ENCODE measurements at regions of chr2 and their contacts with region 1.

Region 1: DNA sequence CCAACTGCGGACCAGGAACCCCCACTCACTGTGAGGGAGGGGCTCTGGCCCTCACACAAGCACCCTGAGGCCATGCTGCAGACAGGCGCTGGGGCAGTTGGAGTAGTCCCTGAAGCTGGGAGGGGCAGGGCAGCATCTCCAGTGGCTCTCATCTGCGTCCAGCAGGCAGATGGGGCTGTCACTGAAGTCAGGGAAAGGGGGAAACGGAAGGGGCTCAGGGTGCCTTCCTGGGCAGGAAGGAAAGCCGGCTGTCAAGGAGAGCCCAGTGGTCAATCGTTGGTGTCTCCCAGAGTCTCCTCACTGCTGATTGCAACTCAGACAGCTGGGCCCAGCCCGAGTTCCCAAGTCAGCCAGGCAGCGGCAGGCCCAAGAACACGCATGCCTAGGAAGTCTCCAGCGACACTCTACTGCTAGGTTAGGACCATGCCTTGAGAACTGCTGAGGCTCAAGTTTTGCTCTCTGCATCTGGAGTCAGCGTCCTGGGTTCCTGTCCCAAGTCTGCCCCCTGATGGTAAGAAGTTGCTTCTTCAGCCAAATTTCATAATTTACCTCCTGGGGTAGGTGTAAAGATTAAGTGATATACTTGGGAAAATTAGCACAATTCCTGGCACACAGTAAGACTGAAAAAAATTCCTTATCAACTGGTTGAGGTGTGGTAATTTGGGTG is 27.5 kb upstream of the NMUR1 start:
- DNase-seq: peak; percentile 61 to 76
- ATAC-seq: peak; percentile 99
- H3K4me3 ChIP-seq: no peak overlapping the region
- H3K27ac ChIP-seq: peak overlapping the region in 2 of 4 donors; percentile 46 to 62
- H3K4me1 ChIP-seq: peaks cover 0 to 7% of the 10 kb centered on the region in 2 donors
- H3K27me3 ChIP-seq: no peaks in the 10 kb centered on the region
- CTCF ChIP-seq: peak; percentile 37 to 77 (median 65)
- POLR2A ChIP-seq: no peak

Region 2: GRCh38 chr2:231470246-231470900 is 87.3 kb before region 1 on chr2:
- in situ Hi-C with region 1: loop called in 1 of 4 experiments (anchors 10 kb)
- intact Hi-C with region 1: no loop called
- DNase-seq: no peak
- ATAC-seq: no peak
- H3K4me3 ChIP-seq: no peak overlapping the region
- H3K27ac ChIP-seq: no peak overlapping the region
- H3K4me1 ChIP-seq: peaks cover 3% of the 10 kb centered on the region in 2 donors
- H3K27me3 ChIP-seq: no peaks in the 10 kb centered on the region
- CTCF ChIP-seq: no peak
- POLR2A ChIP-seq: no peak

Region 3: GRCh38 chr2:231482806-231483391 is 74.8 kb before region 1 on chr2:
- in situ Hi-C with region 1: loop called in 1 of 4 experiments (anchors 10 kb)
- intact Hi-C with region 1: loop called (anchors 1 kb)
- DNase-seq: peak; percentile 46 to 66
- ATAC-seq: peak; percentile 72 to 91
- H3K4me3 ChIP-seq: peak overlapping the region; percentile 46 to 70 (median 58)
- H3K27ac ChIP-seq: peak overlapping the region; percentile 48 to 83 (median 72)
- H3K4me1 ChIP-seq: no peaks in the 10 kb centered on the region
- H3K27me3 ChIP-seq: no peaks in the 10 kb centered on the region
- CTCF ChIP-seq: peak; percentile 78 to 96 (median 82)
- POLR2A ChIP-seq: no peak

Region 4: DNA sequence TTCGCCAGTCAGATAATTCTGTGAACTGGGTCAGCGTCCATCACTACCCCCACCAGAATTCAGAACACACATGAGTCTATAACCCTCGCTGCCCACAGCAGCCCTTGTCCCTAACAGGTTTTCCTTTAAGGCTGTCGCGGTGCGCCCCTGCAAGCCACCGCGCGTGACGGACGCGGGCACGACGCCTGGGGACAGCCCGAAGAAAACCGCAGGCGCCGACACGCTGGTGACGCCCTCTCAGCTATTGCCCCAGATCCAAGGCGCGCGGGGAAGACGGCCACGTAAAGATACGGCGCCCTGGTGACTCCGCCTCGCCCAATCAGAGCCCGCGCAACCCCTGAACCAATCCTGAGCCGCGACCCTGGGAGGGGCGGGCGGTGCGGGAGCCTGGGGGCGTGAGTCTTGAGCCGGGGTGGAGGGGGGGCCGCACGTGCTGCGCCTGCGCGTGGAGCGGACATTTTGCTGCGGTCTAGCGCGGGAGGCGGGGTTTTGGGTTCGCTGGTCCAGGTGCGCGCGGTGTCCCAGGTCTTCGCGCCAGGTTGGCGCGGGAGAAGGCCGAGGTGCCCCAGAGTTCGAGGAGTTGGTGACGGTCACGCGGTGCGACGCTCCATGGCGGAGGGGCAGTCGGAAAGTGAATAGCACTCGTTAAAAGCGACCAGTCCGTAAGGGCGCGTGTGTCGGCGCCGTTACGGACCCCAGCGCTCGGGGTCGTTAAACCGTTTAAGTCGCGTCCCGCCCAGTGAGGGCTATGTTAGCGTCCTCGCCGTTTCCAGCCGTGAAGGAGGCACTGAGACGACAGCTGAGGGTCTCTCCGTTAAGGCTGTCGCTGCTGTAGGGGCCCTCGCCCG is 43.4 kb before region 1 on chr2:
- in situ Hi-C with region 1: no loop called
- intact Hi-C with region 1: loop called (anchors 5 kb)
- DNase-seq: peak; percentile 98 to 99
- ATAC-seq: peak; percentile 93 to 95
- H3K4me3 ChIP-seq: peak overlapping the region; percentile 75 to 97 (median 89)
- H3K27ac ChIP-seq: peak overlapping the region; percentile 92 to 99 (median 96)
- H3K4me1 ChIP-seq: peaks cover 6 to 21% of the 10 kb centered on the region in 2 donors
- H3K27me3 ChIP-seq: no peaks in the 10 kb centered on the region
- CTCF ChIP-seq: no peak
- POLR2A ChIP-seq: peak; percentile 90 to 91

Region 5: DNA sequence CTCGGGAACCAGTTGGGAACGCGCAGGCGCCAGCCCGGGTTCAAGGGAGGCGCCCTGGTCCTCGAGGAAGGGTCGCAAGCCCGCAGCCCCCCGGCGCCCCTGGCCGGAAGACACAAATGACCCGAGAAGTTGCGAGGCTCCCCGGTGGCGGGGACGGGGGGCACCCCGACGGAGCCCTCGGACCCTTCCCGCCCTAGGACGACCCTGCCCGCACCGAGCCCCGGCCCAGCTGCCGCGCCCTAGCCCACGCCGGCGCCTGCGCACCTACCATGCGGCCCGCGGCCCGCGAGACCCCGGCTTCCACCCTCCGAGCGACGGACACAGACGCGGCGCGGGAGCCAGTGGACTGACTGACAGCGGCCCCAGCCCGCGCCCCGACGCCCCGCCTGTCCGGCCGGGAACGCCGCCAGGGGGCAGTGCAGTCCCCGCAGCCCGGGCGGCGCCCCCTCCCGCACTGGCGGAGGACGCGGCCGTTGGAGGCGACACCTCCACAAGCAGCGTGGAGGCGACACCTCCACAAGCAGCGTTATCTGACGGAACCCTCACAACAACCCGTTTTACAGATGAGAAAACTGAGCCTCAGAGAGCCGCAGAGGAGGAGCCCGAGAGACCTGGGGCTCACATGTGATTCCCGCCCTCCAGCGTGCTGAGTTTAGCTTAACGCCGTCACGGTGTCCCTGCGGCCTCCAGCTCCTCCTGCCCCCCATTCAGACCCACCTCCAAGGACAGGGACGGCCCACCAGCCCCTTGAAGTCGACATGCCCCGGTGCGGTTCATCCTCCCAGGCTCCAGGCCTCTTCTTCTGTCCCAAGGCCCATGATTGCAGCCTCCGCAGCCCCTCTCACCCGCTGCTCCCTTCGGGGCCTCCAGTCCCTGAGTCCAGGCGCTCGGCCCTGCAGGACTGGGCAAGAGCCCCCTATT is 27.4 kb before region 1 on chr2 and contains the start of gene NMUR1:
- in situ Hi-C with region 1: no loop called
- intact Hi-C with region 1: loop called (anchors 1 kb)
- DNase-seq: peak in 1 of 2 donors; percentile 38
- ATAC-seq: peak; percentile 57 to 81
- H3K4me3 ChIP-seq: peak within 1 kb of the TSS; percentile 7 to 52 (median 42)
- H3K27ac ChIP-seq: no peak within 1 kb of the TSS
- H3K4me1 ChIP-seq: no peaks in the 10 kb centered on the region
- H3K27me3 ChIP-seq: peaks cover 4 to 7% (median 6%) of the 10 kb centered on the region in 3 donors
- CTCF ChIP-seq: peak; percentile 51 to 86 (median 58)
- POLR2A ChIP-seq: no peak
- total RNA-seq, gene NMUR1: 0.07 TPM in 1 of 4 donors, not detected in the others

Region 6: GRCh38 chr2:232097260-232097659 is 539.6 kb after region 1 on chr2:
- in situ Hi-C with region 1: no loop called
- intact Hi-C with region 1: no loop called
- DNase-seq: no peak
- ATAC-seq: no peak
- H3K4me3 ChIP-seq: no peak overlapping the region
- H3K27ac ChIP-seq: no peak overlapping the region
- H3K4me1 ChIP-seq: no peaks in the 10 kb centered on the region
- H3K27me3 ChIP-seq: no peaks in the 10 kb centered on the region
- CTCF ChIP-seq: no peak
- POLR2A ChIP-seq: no peak

Measured in gastrocnemius medialis (tissue), 4 donors.